Activated CD4-positive, alpha-beta T cell treated with anti-CD3 and anti-CD28 coated beads for 36 hours (primary cell): ENCODE measurements at regions of chr17 and their contacts with region 1.

Region 1: GRCh38 chr17:8383143-8383822 is at the start of gene RPL26:
- DNase-seq: peak; percentile 96
- ATAC-seq: peak; percentile 92
- H3K4me3 Mint-ChIP-seq: peak within 1 kb of the TSS; percentile 100
- H3K27ac Mint-ChIP-seq: peak within 1 kb of the TSS; percentile 99
- H3K4me1 Mint-ChIP-seq: peaks cover 50% of the 10 kb centered on the region
- H3K27me3 Mint-ChIP-seq: no peaks in the 10 kb centered on the region
- total RNA-seq, gene RPL26: 3,064 to 3,721 TPM

Region 2: DNA sequence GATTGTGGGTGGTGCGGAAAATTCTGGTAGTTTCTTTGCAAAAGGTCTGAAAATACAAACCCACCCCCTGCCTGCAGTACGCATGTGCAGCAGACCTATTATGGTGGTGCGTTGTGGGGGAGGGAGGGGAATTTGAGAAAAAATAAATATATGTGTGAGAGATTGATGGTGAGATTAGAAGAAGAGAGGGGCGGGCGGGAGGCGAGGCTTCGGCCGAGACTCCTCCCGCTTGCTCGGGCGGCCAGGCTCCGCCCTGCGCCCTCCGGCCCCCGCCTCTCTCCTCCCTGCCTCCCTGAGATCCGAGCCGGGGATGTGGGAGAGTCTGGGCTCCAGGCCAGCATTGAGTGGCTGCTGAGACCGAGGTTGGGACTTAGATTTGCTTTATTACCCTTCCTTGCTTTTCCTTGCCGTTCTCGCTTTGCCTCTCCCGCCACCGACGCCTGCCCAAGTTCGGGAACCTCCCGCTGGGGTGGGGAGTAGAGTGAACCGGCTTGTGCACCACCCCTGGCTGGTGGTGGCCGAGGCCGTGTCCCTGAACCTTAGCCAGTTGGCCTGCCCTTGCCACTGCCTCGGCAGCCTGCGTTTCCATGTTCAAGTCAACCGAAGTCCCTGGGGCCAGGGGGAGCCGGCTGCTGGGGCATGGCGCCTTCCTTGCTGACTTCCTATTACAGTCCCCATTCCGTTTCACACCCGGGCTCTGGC is 495.6 kb before region 1 on chr17:
- CTCF ChIA-PET with region 1: no interaction called
- POLR2A ChIA-PET with region 1: no interaction called
- intact Hi-C with region 1: loop called in 1 of 2 experiments (anchors 1 kb)
- DNase-seq: peak; percentile 94
- ATAC-seq: peak; percentile 79
- H3K4me3 Mint-ChIP-seq: no peak overlapping the region
- H3K27ac Mint-ChIP-seq: no peak overlapping the region
- H3K4me1 Mint-ChIP-seq: peaks cover 4% of the 10 kb centered on the region
- H3K27me3 Mint-ChIP-seq: no peaks in the 10 kb centered on the region

Region 3: GRCh38 chr17:8189711-8190477 is 193.4 kb before region 1 on chr17 and contains the start of gene BORCS6:
- CTCF ChIA-PET with region 1: no interaction called
- POLR2A ChIA-PET with region 1: no interaction called
- intact Hi-C with region 1: loop called in 1 of 2 experiments (anchors 2 kb)
- DNase-seq: peak; percentile 98
- ATAC-seq: peak; percentile 67
- H3K4me3 Mint-ChIP-seq: no peak within 1 kb of the TSS
- H3K27ac Mint-ChIP-seq: peak within 1 kb of the TSS; percentile 86
- H3K4me1 Mint-ChIP-seq: peaks cover 10% of the 10 kb centered on the region
- H3K27me3 Mint-ChIP-seq: no peaks in the 10 kb centered on the region
- total RNA-seq, gene BORCS6: 3.9 to 4.5 TPM

Region 4: DNA sequence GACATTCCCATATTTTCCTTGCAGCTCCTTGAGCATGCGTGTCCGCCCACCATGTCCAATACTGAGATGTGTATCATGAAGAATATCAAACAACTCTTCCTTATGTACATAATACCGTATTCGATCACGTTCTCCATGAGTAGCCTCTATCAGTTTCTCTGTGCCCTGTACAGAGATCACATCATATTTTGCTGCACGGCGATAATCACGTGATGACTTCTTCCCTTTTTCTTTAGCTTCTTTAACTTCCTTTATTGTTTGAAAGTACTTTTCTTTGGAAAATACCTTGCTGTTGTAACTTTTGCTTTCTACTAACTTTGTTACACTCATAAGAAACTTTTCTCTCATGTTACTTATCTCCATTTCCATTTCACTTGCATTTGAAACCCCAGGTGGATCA is 13.3 kb before region 1 on chr17:
- CTCF ChIA-PET with region 1: no interaction called
- POLR2A ChIA-PET with region 1: interaction called, 15 read pairs
- intact Hi-C with region 1: no loop called
- DNase-seq: no peak
- ATAC-seq: no peak
- H3K4me3 Mint-ChIP-seq: no peak overlapping the region
- H3K27ac Mint-ChIP-seq: no peak overlapping the region
- H3K4me1 Mint-ChIP-seq: peaks cover 4% of the 10 kb centered on the region
- H3K27me3 Mint-ChIP-seq: no peaks in the 10 kb centered on the region

Region 5: DNA sequence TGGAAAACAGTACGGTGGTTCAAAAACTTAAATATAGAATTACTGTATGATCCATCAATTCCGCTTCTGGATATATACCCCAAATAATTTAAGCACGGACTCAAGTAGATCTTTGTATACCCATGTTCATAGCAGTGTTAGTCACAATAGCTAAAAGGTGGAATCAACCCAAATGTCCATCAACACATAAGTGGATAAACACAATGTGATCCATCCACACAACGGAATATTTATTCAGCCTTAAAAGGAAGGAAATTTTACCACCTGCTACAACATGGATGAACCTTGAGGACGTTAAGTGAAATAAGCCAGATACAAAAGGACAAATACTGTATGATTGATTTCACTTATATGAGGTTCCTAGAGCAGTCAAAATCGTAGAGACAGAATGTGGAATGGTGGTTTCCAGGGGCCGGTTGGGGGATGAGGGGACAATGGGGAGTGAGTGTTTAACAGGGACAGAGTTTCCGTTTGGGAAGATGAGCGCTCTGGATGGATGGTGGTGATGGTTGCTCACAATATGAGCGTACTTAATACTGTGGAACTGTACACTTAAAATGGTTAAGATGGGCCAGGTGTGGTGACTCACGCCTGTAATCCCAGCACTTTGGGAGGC is 19.7 kb after region 1 on chr17:
- CTCF ChIA-PET with region 1: no interaction called
- POLR2A ChIA-PET with region 1: no interaction called
- intact Hi-C with region 1: no loop called
- DNase-seq: no peak
- ATAC-seq: no peak
- H3K4me3 Mint-ChIP-seq: no peak overlapping the region
- H3K27ac Mint-ChIP-seq: no peak overlapping the region
- H3K4me1 Mint-ChIP-seq: no peaks in the 10 kb centered on the region
- H3K27me3 Mint-ChIP-seq: peaks cover 13% of the 10 kb centered on the region

Region 6: GRCh38 chr17:8470447-8471047 is 87.3 kb after region 1 on chr17:
- CTCF ChIA-PET with region 1: no interaction called
- POLR2A ChIA-PET with region 1: no interaction called
- intact Hi-C with region 1: no loop called
- DNase-seq: no peak
- ATAC-seq: no peak
- H3K4me3 Mint-ChIP-seq: no peak overlapping the region
- H3K27ac Mint-ChIP-seq: no peak overlapping the region
- H3K4me1 Mint-ChIP-seq: no peaks in the 10 kb centered on the region
- H3K27me3 Mint-ChIP-seq: no peaks in the 10 kb centered on the region

Region 7: DNA sequence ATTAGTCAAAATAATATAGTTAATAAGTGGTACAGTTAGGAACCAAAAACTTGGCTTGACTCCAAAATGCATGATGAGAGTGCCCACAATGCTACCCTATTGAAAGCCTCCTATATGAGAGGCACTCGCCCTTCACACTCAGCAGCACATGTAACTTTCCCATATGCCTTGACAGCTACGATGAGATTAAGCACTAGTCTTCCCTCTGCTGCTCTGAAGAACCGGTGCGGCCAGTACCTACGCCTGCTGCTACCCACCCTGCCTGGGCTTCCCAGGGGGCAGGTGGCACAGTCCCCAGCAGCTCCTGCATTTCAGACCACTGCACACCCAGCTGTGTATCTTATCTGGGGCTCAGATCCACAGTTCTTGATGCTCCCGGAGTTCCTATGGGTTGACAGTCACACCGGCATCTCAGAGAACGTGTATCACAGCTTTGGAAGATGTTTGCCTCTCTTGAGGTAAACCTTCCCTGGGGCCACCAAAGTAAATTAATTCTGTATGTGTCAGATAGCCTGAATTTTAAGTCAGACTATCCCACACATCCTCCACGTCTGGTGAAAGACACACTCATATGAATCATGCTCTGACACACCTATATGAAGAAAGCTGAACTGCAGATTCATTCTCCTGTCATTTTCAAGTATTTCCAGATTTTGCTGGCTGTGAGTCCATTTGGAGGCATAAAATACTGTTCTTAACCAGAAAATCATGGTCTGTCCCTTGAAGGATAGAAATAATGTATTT is 169.5 kb after region 1 on chr17:
- CTCF ChIA-PET with region 1: no interaction called
- POLR2A ChIA-PET with region 1: no interaction called
- intact Hi-C with region 1: no loop called
- DNase-seq: no peak
- ATAC-seq: no peak
- H3K4me3 Mint-ChIP-seq: no peak overlapping the region
- H3K27ac Mint-ChIP-seq: no peak overlapping the region
- H3K4me1 Mint-ChIP-seq: no peaks in the 10 kb centered on the region
- H3K27me3 Mint-ChIP-seq: peaks cover 2% of the 10 kb centered on the region

Region 8: DNA sequence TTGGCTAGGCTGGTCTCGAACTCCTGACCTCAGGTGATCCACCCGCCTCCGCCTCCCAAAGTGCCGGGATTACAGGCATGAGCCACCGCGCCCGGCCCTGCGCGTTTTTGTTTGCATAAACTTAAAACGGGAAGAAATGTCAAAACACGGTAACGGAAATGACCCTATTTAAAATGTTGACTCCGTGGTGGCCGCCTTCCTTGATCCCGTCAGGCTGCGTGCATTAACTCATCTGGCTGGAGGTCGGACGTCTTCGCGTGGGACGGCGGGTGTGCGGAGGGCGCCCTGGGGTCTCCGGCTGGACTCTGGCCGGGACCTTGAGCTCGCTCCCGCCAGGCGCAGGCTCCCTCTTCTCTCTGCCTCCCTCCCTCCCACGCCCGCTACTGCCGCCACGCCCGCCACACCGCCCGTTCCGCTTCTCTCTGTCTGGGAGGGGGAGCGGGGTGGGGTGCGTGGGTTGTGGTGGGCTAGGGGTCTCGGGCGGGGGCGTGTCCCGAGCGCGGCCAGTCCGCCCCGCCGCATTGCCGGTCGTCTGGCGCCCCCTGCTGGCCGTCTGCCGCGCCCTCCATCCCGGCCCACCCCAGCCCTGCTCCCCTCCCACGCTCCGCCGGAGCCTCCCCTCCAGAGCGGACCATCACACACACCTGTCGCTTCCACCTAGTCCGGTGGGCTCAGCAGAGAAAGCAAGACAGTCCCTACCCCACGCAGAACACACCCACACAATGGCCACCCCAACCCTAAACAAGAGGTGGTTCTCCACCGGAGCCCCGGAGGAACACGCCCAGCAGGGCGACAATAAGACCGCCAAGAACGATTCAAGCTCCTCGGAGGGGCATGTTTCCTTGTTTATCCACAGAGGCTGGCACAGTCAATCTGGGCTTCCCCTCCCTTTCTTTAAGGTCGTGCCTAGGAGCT is 362.6 kb after region 1 on chr17:
- CTCF ChIA-PET with region 1: interaction called, 9 read pairs
- POLR2A ChIA-PET with region 1: no interaction called
- intact Hi-C with region 1: loop called (anchors 1 kb)
- DNase-seq: peak; percentile 87
- ATAC-seq: peak; percentile 83
- H3K4me3 Mint-ChIP-seq: peak overlapping the region; percentile 77
- H3K27ac Mint-ChIP-seq: peak overlapping the region; percentile 79
- H3K4me1 Mint-ChIP-seq: peaks cover 3% of the 10 kb centered on the region
- H3K27me3 Mint-ChIP-seq: no peaks in the 10 kb centered on the region

Region 9: GRCh38 chr17:8997994-8998628 is 614.8 kb after region 1 on chr17:
- CTCF ChIA-PET with region 1: interaction called, 4 read pairs
- POLR2A ChIA-PET with region 1: no interaction called
- intact Hi-C with region 1: loop called in 1 of 2 experiments (anchors 1 kb)
- DNase-seq: peak; percentile 89
- ATAC-seq: peak; percentile 73
- H3K4me3 Mint-ChIP-seq: no peak overlapping the region
- H3K27ac Mint-ChIP-seq: no peak overlapping the region
- H3K4me1 Mint-ChIP-seq: peaks cover 9% of the 10 kb centered on the region
- H3K27me3 Mint-ChIP-seq: peaks cover 24% of the 10 kb centered on the region